ENCODE measurements at regions of chr17 and their contacts with region 1.

Region 1: GRCh38 chr17:58789840-58790239 is 34.2 kb downstream of the PPM1E start:
- DNase-seq: no peak
- ATAC-seq: no peak
- H3K4me3 ChIP-seq: no peak overlapping the region
- H3K4me1 ChIP-seq: no peaks in the 10 kb centered on the region
- CTCF ChIP-seq: no peak

Region 2: DNA sequence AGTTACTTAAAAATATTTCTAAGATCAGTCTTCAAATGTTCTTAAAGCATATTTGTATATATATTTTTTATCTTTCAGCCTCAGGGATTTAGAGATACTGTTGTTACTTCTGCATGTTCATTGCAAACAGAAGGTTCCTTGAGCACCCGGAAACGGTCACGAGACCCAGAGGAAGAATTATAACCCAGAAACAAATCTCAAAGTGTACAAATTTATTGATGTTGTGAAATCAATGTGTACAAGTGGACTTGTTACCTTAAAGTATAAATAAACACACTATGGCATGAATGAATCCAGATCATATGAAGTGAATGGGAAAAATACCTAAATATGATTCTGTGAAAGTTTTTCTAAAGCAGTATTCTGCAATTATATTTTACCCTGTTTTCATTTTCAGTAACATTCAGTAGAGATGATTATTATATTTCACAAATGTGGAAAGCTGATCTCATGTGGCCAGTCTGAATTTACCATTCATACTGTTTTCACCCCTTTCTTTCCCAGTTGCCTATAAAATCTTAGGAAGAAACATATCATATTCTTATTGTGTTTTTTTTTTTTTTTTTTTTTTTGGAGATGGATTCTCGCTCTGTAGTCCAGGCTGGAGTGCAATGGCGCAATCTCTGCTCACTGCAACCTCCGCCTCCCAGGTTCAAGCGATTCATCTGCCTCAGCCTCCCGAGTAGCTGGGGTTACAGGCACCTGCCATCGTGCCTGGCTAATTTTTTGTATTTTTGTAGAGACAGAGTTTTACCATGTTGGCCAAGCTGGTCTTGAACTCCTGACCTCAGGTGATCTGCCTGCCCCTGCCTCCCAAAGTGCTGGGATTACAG is 55.6 kb before region 1 on chr17:
- intact Hi-C with region 1: loop called in 1 of 2 experiments (anchors 10 kb)
- DNase-seq: no peak
- ATAC-seq: no peak
- H3K4me3 ChIP-seq: no peak overlapping the region
- H3K4me1 ChIP-seq: no peaks in the 10 kb centered on the region
- CTCF ChIP-seq: no peak